K562 (cell line): ENCODE measurements at regions of chr10 and their contacts with region 1.

Region 1: DNA sequence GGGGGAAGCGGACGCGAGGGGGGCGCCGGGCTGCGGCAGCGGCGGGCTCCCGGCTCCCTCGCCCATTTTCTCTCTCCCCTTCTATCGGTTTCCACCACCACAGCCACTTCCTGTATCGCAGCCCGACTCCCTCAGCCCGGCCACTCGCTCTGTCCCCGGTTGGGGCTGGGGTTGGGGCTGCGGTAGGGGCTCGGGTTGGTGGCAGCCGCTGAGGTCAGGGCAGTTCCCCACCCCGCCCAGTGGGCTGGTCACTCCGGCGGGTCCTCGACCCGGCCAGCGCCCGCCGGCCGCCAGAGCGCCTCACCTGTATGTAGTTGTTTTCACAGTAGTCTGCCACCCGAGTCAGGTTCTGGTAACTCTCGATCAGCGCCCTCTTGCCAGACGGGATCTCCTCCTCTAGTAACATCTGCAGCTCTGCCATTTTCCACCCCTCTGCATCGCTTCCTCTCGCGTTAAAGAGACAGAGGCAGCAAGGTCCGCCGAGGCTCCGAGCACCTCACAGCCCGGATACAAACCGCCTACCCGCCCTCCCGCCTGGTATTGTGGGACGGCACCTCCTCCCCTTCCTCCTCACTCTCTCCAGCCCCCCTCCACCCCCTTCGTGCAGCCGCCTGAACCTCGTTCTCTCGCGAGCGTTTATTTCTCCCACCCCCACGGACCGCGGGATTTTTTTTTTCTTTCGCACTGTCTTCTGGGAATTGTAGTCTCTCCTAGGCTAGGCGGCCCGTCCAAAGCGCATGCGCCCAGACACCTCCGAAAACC is at the start of gene ABI1:
- DNase-seq: peak; percentile 96 to 98 (median 97)
- ATAC-seq: peak; percentile 92
- H3K4me3 ChIP-seq: peak within 1 kb of the TSS; percentile 100
- H3K27ac ChIP-seq: peak within 1 kb of the TSS; percentile 94
- H3K4me1 ChIP-seq: peaks cover 3 to 14% of the 10 kb centered on the region in 2 experiments; a peak in 4 of 5 replicates
- H3K27me3 ChIP-seq: 0 out of 5 replicates have a peak, but pooled peaks cover 4 to 5% of the 10 kb centered on the region in 2 experiments
- CTCF ChIP-seq: no peak
- EP300 ChIP-seq: peak; percentile 9; the same call in 1 of the 2 replicates
- POLR2A ChIP-seq: peak; percentile 94
- RAD21 ChIP-seq: no peak
- polyA plus RNA-seq, gene ABI1: 39.0 to 52.3 TPM

Region 2: DNA sequence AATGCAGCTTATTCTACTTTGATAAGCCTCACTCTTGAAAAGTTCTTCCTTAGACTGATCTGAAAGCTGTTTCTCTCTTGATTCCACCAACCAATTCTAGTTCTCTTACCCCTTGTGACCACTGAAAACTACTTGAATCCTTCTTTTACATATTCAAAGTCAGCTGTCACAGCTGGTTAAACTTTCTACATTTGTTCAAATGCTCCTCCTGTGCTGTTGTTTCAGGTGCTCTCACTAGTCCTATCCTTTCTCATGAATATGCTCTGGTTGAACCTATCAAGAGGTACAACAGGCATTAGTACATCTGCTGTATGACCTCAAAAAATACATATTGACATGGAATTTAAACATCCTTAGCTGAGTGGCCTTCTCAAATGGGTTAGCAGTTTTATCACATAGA is 835.1 kb before region 1 on chr10:
- CTCF ChIA-PET with region 1: no interaction called
- POLR2A ChIA-PET with region 1: no interaction called
- in situ Hi-C with region 1: no loop called
- intact Hi-C with region 1: no loop called
- DNase-seq: no peak
- ATAC-seq: no peak
- H3K4me3 ChIP-seq: no peak overlapping the region
- H3K27ac ChIP-seq: no peak overlapping the region
- H3K4me1 ChIP-seq: no peaks in the 10 kb centered on the region
- H3K27me3 ChIP-seq: no peaks in the 10 kb centered on the region
- CTCF ChIP-seq: no peak
- EP300 ChIP-seq: no peak
- POLR2A ChIP-seq: no peak
- RAD21 ChIP-seq: no peak

Region 3: GRCh38 chr10:26642896-26643653 is 217.5 kb before region 1 on chr10:
- CTCF ChIA-PET with region 1: no interaction called
- POLR2A ChIA-PET with region 1: no interaction called
- in situ Hi-C with region 1: no loop called
- intact Hi-C with region 1: no loop called
- DNase-seq: peak; percentile 24 to 60 (median 50)
- ATAC-seq: peak; percentile 80
- H3K4me3 ChIP-seq: no peak overlapping the region
- H3K27ac ChIP-seq: no peak overlapping the region
- H3K4me1 ChIP-seq: peaks cover 0 to 5% of the 10 kb centered on the region in 2 experiments; a peak in 1 of 5 replicates
- H3K27me3 ChIP-seq: peaks cover 0 to 19% of the 10 kb centered on the region in 2 experiments; a peak in 3 of 5 replicates
- CTCF ChIP-seq: no peak
- EP300 ChIP-seq: no peak
- POLR2A ChIP-seq: no peak
- RAD21 ChIP-seq: no peak

Region 4: GRCh38 chr10:26706206-26706605 is 154.4 kb before region 1 on chr10:
- CTCF ChIA-PET with region 1: no interaction called
- POLR2A ChIA-PET with region 1: no interaction called
- in situ Hi-C with region 1: no loop called
- intact Hi-C with region 1: no loop called
- DNase-seq: no peak
- ATAC-seq: no peak
- H3K4me3 ChIP-seq: no peak overlapping the region
- H3K27ac ChIP-seq: no peak overlapping the region
- H3K4me1 ChIP-seq: no peaks in the 10 kb centered on the region; a peak in 1 of 5 replicates
- H3K27me3 ChIP-seq: no peaks in the 10 kb centered on the region
- CTCF ChIP-seq: no peak
- EP300 ChIP-seq: no peak
- POLR2A ChIP-seq: no peak
- RAD21 ChIP-seq: no peak

Region 5: GRCh38 chr10:26755443-26755903 is 105.2 kb before region 1 on chr10:
- CTCF ChIA-PET with region 1: no interaction called
- POLR2A ChIA-PET with region 1: no interaction called
- in situ Hi-C with region 1: no loop called
- intact Hi-C with region 1: loop called (anchors 5 kb)
- DNase-seq: peak in 2 of 4 experiments; percentile 17 to 33
- ATAC-seq: peak; percentile 54
- H3K4me3 ChIP-seq: no peak overlapping the region
- H3K27ac ChIP-seq: peak overlapping the region; percentile 49; the same call in 2 of the 3 replicates
- H3K4me1 ChIP-seq: peaks cover 0 to 6% of the 10 kb centered on the region in 2 experiments; a peak in 3 of 5 replicates
- H3K27me3 ChIP-seq: no peaks in the 10 kb centered on the region
- CTCF ChIP-seq: no peak
- EP300 ChIP-seq: no peak
- POLR2A ChIP-seq: no peak
- RAD21 ChIP-seq: no peak

Region 6: DNA sequence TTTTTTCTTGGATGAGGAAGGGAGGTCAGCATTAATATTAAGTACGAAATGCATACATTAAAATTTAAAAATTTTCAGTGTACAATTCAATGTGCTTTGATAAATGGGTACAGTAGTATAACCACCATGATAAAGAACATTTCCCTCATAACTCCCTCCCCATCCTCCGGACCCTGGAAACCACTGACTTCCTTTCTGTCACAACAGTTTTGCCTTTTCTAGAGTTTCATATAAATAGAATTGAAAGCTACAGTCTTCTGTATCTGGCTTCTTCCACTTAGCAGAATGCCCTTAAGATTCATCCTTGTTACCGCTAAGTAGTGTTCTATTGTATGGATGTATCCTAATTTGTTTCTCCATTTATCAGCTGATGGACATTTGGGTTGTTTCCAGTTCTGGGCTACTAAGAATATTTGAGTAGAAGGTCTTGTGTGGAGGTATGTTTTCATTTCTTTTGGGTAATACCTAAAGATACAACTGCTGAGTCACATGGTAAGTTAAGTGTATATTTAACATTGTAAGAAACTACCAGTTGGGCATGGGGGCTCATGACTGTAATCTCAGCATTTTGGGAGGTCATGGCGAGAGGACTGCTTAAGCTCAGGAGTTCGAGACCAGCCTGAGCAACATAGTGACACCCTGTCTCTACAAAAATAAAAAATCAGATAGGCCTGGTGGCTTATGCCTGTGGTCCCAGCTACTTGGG is 30.7 kb before region 1 on chr10:
- CTCF ChIA-PET with region 1: no interaction called
- POLR2A ChIA-PET with region 1: no interaction called
- in situ Hi-C with region 1: no loop called
- intact Hi-C with region 1: no loop called
- DNase-seq: no peak
- ATAC-seq: no peak
- H3K4me3 ChIP-seq: no peak overlapping the region
- H3K27ac ChIP-seq: no peak overlapping the region
- H3K4me1 ChIP-seq: no peaks in the 10 kb centered on the region
- H3K27me3 ChIP-seq: no peaks in the 10 kb centered on the region
- CTCF ChIP-seq: no peak
- EP300 ChIP-seq: no peak
- POLR2A ChIP-seq: no peak
- RAD21 ChIP-seq: no peak

Region 7: DNA sequence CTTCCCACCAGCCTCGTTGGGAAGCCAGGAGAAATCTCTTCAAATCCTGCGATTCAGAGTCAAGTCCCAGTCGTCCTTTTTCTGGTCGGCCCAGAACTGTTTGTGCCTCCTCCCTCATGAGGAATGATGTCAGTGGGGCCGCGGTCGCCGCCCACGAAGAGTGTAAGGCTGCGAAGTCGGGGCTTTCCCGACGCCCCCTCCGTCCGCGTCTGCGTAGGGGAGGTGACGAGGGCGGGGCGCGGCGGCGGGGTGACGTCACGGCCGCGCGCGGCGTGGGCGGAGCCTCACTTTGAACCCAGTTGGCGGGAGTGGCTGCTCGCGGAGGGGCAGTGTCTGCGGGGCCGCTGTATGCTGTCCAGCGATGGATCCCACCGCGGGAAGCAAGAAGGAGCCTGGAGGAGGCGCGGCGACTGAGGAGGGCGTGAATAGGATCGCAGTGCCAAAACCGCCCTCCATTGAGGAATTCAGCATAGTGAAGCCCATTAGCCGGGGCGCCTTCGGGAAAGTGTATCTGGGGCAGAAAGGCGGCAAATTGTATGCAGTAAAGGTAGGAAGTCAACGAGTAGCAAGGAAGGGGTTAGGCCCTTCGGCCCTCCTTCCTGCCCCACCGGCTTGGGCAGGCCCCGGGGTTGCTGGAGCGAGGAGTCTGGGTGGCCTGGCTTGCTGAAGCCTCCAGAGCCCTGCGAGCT is 294.6 kb after region 1 on chr10 and contains the start of gene MASTL:
- CTCF ChIA-PET with region 1: no interaction called
- POLR2A ChIA-PET with region 1: no interaction called
- in situ Hi-C with region 1: no loop called
- intact Hi-C with region 1: loop called (anchors 10 kb)
- DNase-seq: peak; percentile 92 to 96 (median 94)
- ATAC-seq: peak; percentile 90
- H3K4me3 ChIP-seq: peak within 1 kb of the TSS; percentile 70
- H3K27ac ChIP-seq: peak within 1 kb of the TSS; percentile 98
- H3K4me1 ChIP-seq: peaks cover 7 to 16% of the 10 kb centered on the region in 2 experiments; a peak in 4 of 5 replicates
- H3K27me3 ChIP-seq: no peaks in the 10 kb centered on the region
- CTCF ChIP-seq: no peak
- EP300 ChIP-seq: no peak
- POLR2A ChIP-seq: peak; percentile 88
- RAD21 ChIP-seq: no peak
- polyA plus RNA-seq, gene MASTL: 6.8 to 8.0 TPM